Heart left ventricle (tissue), 16 donors: ENCODE measurements at regions of chr22 and their contacts with region 1.

Region 1: GRCh38 chr22:45309472-45310227 is at the start of gene FAM118A:
- DNase-seq: peak; percentile 92 to 99 (median 93)
- ATAC-seq: peak; percentile 93 to 97 (median 96)
- H3K4me3 ChIP-seq: peak within 1 kb of the TSS; percentile 48 to 99 (median 90)
- H3K27ac ChIP-seq: peak within 1 kb of the TSS; percentile 51 to 90 (median 84)
- H3K4me1 ChIP-seq: peaks cover 0 to 34% (median 20%) of the 10 kb centered on the region in 12 donors
- H3K27me3 ChIP-seq: no peaks in the 10 kb centered on the region
- CTCF ChIP-seq: peak in 4 of 12 donors; percentile 16 to 34 (median 25)
- POLR2A ChIP-seq: peak in 1 of 2 donors; percentile 81
- total RNA-seq, gene FAM118A: 4.0 to 46.8 (median 15.0) TPM

Region 2: GRCh38 chr22:45284705-45285262 is 24.9 kb before region 1 on chr22 and contains the start of gene UPK3A:
- intact Hi-C with region 1: loop called in 1 of 10 experiments (anchors 2 kb)
- DNase-seq: peak; percentile 53 to 87 (median 77)
- ATAC-seq: peak; percentile 73 to 96 (median 92)
- H3K4me3 ChIP-seq: peak within 1 kb of the TSS in 10 of 12 donors; percentile 12 to 53 (median 39)
- H3K27ac ChIP-seq: peak within 1 kb of the TSS in 1 of 12 donors; percentile 28
- H3K4me1 ChIP-seq: peaks cover 0 to 32% (median 9%) of the 10 kb centered on the region in 12 donors
- H3K27me3 ChIP-seq: peaks cover 0 to 17% (median 0%) of the 10 kb centered on the region in 9 donors
- CTCF ChIP-seq: no peak
- POLR2A ChIP-seq: no peak
- total RNA-seq, gene UPK3A: 0.34 to 0.45 TPM in 2 of 9 donors, not detected in the others

Region 3: DNA sequence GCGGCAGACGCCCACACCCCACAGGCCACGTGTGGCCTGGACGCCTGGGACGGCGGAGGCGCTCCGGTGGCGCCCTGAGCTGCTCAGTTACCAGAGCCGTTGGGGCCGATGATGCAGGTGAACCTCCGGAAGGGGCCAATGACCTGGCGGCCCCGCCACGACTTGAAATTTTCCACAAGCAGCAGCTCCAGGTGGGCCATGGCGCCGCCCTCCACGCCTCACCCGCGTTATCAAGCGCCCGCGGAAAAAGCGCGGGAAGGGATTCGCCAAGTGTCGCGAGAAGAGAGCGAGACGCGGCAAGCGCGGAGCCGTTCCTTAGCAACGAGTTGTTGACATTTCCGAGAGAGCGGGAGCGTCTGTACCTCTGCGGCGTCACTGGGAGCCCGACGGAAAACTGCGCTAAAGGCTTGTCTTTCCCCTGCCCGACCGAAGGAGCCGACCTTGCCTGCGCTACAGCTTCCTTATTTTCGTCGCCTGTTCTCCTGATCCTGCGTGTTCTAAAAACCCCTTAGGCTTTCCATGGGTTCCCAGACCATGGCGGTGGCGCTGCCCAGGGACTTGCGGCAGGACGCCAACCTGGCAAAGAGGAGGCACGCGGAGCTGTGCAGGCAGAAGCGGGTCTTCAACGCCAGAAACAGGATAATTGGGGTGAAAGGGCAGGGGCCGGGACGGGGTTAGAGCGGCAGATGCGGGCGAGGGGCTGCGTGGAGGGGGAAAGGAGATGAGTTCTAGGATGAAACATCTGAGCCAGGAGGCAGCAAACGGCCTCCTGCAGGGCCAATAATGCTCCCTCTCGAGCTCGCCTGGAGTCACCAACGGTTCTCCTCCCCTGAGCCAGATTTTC is 103.9 kb after region 1 on chr22 and contains the starts of genes RIBC2 and SMC1B:
- intact Hi-C with region 1: loop called in 1 of 10 experiments (anchors 10 kb)
- DNase-seq: peak; percentile 66 to 86 (median 77)
- ATAC-seq: peak; percentile 75 to 97 (median 92)
- H3K4me3 ChIP-seq: peak within 1 kb of the TSS; percentile 8 to 64 (median 45)
- H3K27ac ChIP-seq: no peak within 1 kb of the TSS
- H3K4me1 ChIP-seq: peaks cover 0 to 15% (median 7%) of the 10 kb centered on the region in 12 donors
- H3K27me3 ChIP-seq: peaks cover 0 to 9% (median 0%) of the 10 kb centered on the region in 9 donors
- CTCF ChIP-seq: peak in 1 of 12 donors; percentile 4
- POLR2A ChIP-seq: no peak
- total RNA-seq, gene RIBC2: 1.0 TPM in 1 of 9 donors, not detected in the others
- total RNA-seq, gene SMC1B: not detected

Region 4: DNA sequence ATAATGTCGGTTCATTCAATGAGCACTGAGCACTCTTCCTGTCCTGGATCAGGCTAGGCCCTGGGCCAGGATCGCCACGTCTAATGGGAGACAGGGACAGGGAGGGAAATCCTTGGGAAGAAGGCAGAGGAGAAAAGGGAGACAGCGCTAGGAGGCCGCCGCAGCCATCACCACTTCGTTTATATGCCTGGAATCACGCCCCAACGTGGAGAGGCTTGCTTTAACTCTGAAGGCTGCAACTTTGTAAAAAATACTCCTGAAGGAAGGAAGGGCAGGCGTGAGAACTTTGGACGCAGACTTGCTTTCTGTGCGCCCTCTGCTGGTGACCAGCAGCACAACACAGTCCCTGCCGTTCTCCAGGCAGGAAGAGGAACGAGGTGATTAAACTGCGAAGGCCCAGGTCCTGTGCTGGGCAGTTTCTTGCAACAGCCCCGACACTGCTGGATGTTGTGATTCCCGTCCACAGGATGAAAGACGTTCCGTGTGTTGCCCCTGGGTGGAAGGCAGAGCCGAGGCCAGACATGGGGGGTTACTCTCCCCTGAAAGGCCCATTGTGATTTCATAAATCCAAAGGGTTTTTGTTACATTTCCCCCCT is 126.0 kb after region 1 on chr22:
- intact Hi-C with region 1: loop called in 2 of 10 experiments (anchors 10 kb)
- DNase-seq: peak; percentile 82 to 92 (median 87)
- ATAC-seq: peak; percentile 86 to 96 (median 94)
- H3K4me3 ChIP-seq: peak overlapping the region in 8 of 12 donors; percentile 18 to 44 (median 28)
- H3K27ac ChIP-seq: peak overlapping the region in 11 of 12 donors; percentile 17 to 75 (median 61)
- H3K4me1 ChIP-seq: peaks cover 0 to 14% (median 6%) of the 10 kb centered on the region in 12 donors
- H3K27me3 ChIP-seq: peaks cover 0 to 11% (median 0%) of the 10 kb centered on the region in 9 donors
- CTCF ChIP-seq: peak; percentile 93 to 99 (median 96)
- POLR2A ChIP-seq: no peak